Activated T-helper 1 cell treated with anti-CD3 and anti-CD28 coated beads, Interleukin-12 subunit alpha, Interleukin-12 subunit beta, Interleukin-2, Interleukin-4 antibody, amounts not matched to agents 30 ng/mL and 10 ng/mL and 1 ng/mL, durations not matched to agents 14 hours and 24 hours and 36 hours (primary cell): ENCODE measurements at regions of chr21 and their contacts with region 1.

Region 1: DNA sequence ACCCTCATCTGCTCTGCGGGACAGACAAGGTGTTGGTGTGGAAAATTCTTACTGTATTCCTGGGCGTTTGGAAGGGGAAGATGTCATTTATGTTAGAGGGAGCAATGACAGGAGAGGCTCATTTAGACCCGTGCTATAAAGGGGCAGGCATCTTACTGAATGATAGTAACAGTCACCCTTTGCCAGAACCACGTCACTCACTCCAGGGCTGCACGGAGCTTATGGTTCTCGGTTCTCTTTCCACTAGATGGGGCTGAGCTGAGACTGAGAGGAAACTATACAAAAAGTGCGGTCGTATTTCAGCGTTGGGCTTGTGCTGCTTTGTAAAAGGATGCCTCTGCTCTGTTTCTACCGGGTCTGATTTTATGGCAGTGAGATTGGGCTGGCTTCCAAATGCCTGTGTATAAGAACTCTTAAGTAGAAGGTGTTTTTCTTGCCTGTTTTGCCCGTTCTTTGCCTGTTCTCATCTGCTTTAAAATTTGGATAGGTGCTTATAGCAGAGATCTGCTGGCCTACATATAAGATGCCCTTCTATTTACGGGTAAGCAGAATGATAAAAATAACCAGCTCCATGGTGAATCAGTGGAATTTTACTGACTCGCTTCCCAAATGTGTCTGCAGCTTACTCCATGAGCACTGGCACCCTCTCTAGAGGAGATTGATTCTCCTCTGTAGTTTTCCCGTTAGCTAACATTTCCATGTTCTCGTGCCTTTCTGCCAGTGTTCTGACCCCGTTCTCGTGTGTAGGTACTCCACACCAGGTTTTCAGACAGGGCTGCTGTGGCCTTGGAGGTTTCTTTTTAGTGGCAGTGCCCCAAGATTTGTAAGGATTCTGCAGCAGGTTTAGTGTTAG is 55.9 kb downstream of the MRPS6 start:
- DNase-seq: peak; percentile 72
- H3K4me3 Mint-ChIP-seq: peak overlapping the region; percentile 64
- H3K27ac Mint-ChIP-seq: peak overlapping the region; percentile 97
- H3K4me1 Mint-ChIP-seq: peaks cover 79% of the 10 kb centered on the region
- H3K27me3 Mint-ChIP-seq: no peaks in the 10 kb centered on the region

Region 2: GRCh38 chr21:33924079-33924765 is 205.0 kb before region 1 on chr21:
- intact Hi-C with region 1: loop called (anchors 2 kb)
- DNase-seq: peak; percentile 79
- H3K4me3 Mint-ChIP-seq: no peak overlapping the region
- H3K27ac Mint-ChIP-seq: no peak overlapping the region
- H3K4me1 Mint-ChIP-seq: peaks cover 27% of the 10 kb centered on the region
- H3K27me3 Mint-ChIP-seq: peaks cover 3% of the 10 kb centered on the region

Region 3: GRCh38 chr21:34020005-34020847 is 109.0 kb before region 1 on chr21:
- intact Hi-C with region 1: loop called (anchors 5 kb)
- DNase-seq: no peak
- H3K4me3 Mint-ChIP-seq: peak overlapping the region; percentile 38
- H3K27ac Mint-ChIP-seq: peak overlapping the region; percentile 59
- H3K4me1 Mint-ChIP-seq: peaks cover 26% of the 10 kb centered on the region
- H3K27me3 Mint-ChIP-seq: no peaks in the 10 kb centered on the region

Region 4: DNA sequence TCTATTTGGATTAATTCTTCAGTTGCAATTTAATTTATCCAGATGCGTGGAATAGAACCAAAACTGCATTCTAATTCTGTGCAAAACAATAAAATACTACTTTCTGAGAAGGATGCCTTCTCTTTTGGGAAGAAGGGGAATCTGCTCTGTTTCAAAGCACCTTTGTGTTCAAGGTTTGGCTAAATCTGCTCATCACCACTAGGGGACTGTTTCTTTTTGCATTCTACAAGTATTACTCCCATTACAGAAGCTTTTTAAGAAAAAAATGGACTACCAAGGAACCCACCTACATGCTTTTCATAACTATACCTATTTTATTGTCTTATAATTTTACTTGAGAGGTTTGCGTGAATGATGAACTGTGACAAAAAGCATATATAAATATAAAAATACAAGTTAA is 37.7 kb before region 1 on chr21:
- intact Hi-C with region 1: loop called (anchors 5 kb)
- DNase-seq: no peak
- H3K4me3 Mint-ChIP-seq: no peak overlapping the region
- H3K27ac Mint-ChIP-seq: no peak overlapping the region
- H3K4me1 Mint-ChIP-seq: peaks cover 39% of the 10 kb centered on the region
- H3K27me3 Mint-ChIP-seq: no peaks in the 10 kb centered on the region

Region 5: GRCh38 chr21:34190576-34191321 is 61.5 kb after region 1 on chr21:
- intact Hi-C with region 1: loop called (anchors 1 kb)
- DNase-seq: no peak
- H3K4me3 Mint-ChIP-seq: peak overlapping the region; percentile 66
- H3K27ac Mint-ChIP-seq: peak overlapping the region; percentile 92
- H3K4me1 Mint-ChIP-seq: peaks cover 53% of the 10 kb centered on the region
- H3K27me3 Mint-ChIP-seq: no peaks in the 10 kb centered on the region

Region 6: GRCh38 chr21:34345091-34345871 is 216.0 kb after region 1 on chr21:
- intact Hi-C with region 1: loop called (anchors 1 kb)
- DNase-seq: no peak
- H3K4me3 Mint-ChIP-seq: no peak overlapping the region
- H3K27ac Mint-ChIP-seq: no peak overlapping the region
- H3K4me1 Mint-ChIP-seq: peaks cover 17% of the 10 kb centered on the region
- H3K27me3 Mint-ChIP-seq: peaks cover 22% of the 10 kb centered on the region